Right ventricle myocardium superior (tissue), 1 donor: ENCODE measurements at regions of chr22 and their contacts with region 1.

Region 1: DNA sequence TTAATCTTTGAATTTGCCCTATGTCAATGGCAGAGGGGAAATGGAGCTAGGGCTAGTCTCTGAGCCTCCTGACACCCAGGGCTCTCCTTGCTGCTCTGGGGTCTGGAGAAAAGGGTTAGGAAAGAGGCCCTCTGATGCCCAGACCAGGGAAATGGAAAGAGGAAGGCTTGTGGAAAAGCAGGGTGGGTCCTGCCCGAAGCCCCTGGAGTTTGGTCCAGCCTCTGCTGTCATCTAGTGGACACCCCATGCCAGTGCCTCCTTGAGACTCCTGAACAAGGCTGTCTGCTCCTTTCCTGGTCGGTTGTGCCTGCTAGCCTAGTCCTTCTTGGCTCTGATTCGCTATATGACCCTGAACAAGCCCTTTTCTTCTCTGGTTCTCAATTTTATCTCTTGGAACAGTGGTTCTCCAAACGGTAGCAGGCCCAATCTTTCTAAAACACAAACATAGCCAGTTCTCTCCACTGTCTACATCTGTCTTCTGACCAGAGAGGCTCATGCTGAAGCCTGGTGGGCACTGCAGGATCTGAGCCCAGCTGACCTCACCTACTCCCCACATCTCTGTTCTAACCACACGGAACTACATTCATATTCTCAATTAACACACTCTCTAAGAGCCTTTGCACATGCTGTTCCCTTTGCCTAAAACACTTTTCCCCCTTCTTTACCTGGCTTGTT is 8.8 kb upstream of the PLA2G3 start:
- DNase-seq: peak; percentile 75
- ATAC-seq: peak; percentile 97

Region 2: GRCh38 chr22:30680991-30681770 is 467.9 kb before region 1 on chr22:
- intact Hi-C with region 1: no loop called
- DNase-seq: no peak
- ATAC-seq: peak; percentile 41

Region 3: DNA sequence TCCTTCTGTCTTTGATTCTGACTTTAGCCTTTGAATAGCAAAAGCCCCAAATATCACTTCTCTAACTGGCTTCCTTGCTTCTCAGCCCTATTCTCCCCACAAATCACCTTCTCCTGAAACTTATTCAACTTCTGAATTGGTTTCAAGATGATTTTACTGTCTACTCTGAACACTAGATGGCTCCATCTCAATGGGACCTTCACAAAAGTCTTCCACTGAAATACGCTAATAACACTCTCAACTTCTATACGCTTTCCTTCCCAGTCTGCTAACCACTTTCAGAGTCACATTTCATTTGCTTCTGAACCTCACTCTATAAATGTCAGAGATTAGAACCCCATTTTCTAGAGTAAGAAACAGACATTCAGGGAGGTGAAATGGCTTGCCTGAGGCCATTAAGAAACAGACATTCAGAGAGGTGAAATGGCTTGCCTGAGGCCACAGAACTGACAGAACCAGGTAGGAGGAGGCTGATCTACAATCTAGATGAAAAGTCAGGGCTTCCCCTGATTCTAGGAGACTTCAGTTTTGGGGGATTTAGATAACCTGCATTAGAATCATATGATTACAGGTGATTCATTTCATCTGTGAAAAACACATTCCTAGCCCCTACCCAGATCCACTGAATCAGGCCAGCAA is 201.2 kb before region 1 on chr22:
- intact Hi-C with region 1: loop called (anchors 5 kb)
- DNase-seq: no peak
- ATAC-seq: peak; percentile 79

Region 4: DNA sequence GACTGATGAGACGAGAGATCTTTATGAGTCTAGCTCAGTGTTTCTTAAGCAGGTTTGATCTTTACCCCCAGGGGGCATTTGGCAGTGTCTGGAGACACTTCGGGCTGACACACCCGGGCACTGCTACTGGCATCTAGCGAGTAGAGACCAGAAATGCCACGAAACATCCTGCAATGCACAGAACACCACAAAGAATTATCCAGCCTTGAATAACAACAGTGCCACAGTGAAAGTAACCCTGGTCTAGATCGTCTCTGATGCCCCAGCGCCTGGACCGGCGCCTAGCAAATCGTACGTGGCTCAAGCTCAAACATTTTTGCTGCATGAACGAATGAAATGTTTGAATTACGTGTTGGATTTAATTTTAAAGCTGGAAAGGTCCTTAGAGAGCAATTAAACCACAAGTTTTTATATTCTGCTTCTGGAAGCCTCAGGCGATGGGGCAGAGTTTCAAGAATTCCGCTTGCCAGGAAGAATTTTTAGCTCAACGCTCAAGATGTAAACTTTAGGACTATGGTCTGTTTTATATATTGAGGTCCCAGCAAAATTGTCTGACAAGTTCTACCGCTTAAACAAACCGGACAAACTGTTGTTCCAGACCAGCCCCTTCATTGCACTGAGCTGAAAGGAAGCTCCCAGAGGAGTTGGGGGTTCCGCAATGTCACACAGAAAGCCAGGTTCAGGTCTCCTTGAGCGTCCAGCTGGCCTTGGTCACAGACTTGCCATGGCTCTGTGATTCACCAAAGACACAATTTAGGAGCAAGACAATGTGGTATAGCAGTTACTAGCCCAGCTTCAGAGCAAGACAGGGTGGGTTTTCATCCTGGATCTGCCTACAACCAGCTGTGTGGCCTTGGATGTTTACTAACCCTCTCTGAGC is 112.2 kb before region 1 on chr22:
- intact Hi-C with region 1: no loop called
- DNase-seq: no peak
- ATAC-seq: peak; percentile 46

Region 5: DNA sequence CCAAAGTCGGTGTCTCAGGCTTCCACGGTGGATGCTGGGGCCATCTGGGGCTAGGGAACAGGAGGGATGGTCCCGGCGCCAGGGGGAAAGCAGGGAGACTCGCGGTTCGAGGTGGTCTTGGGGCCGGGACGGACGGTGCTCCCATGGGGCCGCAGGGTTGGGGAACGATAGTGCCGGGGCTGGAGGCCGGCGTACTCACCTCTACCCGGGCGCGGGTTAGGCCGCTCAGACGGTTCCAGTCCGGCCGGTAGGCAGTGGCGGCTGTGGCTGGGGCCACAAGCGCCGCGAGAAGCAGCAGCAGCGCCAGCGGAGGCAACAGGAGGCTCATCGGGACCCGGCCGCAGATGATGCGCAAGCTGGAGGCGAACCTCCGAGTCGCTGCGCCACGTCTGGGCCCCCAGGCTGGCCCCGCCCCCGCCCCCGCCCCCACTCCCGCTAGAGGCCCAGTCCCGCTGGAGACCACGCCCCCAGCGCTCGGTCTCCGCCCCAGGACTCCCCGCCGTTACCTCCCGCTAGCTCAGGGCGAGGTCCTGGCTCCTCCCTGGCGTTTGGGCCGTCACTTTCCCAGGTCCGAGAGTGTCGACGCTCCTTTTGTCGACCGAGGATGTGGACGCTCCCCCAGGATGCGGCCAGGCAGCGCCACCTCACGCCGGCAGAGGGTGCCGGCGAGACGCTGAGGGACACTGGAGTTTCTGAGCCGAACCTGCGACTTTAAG is 41.8 kb before region 1 on chr22 and contains the start of gene SELENOM:
- intact Hi-C with region 1: loop called (anchors 2 kb)
- DNase-seq: peak; percentile 98
- ATAC-seq: peak; percentile 90
- total RNA-seq, gene SELENOM: 43.4 TPM

Region 6: GRCh38 chr22:31345331-31346254 is 196.5 kb after region 1 on chr22:
- intact Hi-C with region 1: no loop called
- DNase-seq: peak; percentile 91
- ATAC-seq: peak; percentile 80